Heart left ventricle (tissue), 16 donors: ENCODE measurements at regions of chr6 and their contacts with region 1.

Region 1: DNA sequence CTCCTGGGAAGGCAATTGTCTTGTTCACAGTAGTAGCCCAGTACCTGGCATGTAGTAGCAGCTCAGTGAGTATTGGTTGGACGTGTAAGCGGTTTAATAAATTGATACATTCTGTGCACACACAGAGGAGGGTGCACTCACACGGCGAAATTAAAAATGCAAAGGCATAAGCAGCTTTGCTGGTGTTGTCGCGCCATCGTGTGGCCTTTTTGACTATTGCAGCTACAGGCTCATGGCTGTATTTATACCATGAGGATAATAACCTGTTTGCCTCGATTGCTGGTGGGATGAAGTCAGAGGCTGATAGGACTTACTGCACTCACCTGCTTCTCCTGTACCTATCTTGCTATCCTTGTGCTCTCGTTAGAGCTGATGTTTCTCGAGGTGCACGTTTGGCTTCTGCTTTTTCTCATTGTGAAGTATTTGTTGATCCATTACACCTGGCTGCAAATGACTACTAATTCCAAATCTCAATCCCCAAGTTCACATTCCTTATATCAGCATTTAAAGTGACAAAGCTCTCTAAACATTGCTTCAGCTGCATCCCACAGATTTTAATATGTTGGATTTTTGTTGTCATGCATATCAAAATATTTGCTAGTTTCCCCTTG is 61.5 kb downstream of the TBXT start:
- DNase-seq: peak; percentile 45 to 78 (median 64)
- ATAC-seq: peak in 3 of 4 donors; percentile 60 to 86 (median 73)
- H3K4me3 ChIP-seq: no peak overlapping the region
- H3K27ac ChIP-seq: no peak overlapping the region
- H3K4me1 ChIP-seq: no peaks in the 10 kb centered on the region
- H3K27me3 ChIP-seq: peaks cover 0 to 16% (median 5%) of the 10 kb centered on the region in 9 donors
- CTCF ChIP-seq: peak; percentile 77 to 93 (median 84)
- POLR2A ChIP-seq: no peak

Region 2: DNA sequence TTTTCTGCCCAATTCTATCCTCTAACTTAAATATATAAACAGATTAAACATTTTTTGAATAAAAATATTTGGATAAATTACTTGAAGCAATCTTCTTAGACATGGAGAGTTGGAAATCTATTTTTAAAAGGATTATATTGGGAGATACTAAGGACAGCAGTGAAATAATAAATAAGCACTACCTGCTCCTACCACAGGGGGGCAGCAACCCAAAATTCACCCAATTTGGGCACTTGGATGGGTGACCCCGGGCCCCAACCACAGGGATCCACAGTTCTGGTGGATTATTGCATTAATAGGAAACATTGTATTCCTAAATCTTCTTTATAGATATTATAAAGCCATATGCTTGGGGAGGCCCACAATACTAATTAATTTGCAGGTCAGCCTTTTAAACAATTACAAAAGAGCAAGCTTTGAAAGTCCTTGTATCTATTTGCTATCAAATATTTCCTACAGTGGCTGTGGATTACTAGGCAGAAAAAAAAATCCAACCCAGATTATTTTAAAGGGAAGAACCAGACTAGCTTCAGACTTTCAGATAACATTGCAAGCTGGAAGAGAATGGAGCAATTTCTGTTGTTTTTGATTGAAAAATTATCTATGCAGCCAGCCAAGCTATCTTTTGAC is 376.8 kb before region 1 on chr6:
- intact Hi-C with region 1: loop called in 1 of 10 experiments (anchors 10 kb)
- DNase-seq: no peak
- ATAC-seq: peak in 2 of 4 donors; percentile 51 to 63
- H3K4me3 ChIP-seq: no peak overlapping the region
- H3K27ac ChIP-seq: no peak overlapping the region
- H3K4me1 ChIP-seq: peaks cover 0 to 5% (median 0%) of the 10 kb centered on the region in 12 donors
- H3K27me3 ChIP-seq: no peaks in the 10 kb centered on the region
- CTCF ChIP-seq: peak; percentile 71 to 92 (median 86)
- POLR2A ChIP-seq: no peak

Region 3: DNA sequence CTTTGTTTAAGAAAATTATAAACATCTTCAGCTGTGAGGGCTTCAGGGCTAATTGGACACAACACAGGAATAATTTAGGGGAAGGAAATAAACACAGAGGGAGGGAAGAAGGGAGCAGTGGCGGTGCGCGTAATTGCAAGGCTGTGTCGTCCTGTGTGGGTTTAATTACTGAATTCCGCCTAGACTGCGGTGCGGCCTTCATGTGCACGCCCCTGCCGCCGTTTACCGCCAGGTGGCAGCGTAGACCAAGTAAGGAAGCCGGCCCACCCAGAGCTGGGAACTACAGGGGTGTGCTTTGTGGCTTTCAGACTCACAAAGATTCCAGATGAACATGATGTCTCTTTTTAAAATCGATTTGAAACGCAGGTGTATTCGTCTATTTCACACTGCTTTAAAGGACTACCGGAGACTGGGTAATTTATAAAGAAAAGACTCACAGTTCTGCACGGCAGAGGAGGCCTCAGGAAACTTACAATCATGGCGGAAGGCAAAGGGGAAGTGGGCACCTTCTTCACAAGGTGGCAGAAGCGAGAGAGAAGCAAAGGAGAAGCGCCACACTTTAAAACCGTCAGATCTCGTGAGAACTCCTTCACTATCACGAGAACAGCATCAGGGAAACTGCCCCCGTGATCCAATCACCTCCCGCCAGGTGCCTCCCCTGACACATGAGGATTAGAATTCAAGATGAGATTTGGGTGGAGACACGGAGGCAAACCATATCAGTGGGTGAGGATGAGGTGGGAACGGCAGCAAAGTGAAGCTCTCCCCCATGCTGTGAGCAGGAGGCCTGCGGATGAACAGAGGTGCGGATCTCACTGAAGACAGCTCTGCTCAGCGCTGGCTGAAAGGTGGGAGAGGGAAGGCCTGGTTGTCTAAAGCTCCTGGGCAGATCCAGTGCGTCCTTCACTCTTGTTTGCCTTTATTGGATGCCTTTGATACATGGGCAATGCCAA is 221.1 kb before region 1 on chr6:
- intact Hi-C with region 1: loop called in 6 of 10 experiments (anchors 1 to 2 kb)
- DNase-seq: peak; percentile 74 to 86 (median 77)
- ATAC-seq: peak; percentile 74 to 96 (median 89)
- H3K4me3 ChIP-seq: no peak overlapping the region
- H3K27ac ChIP-seq: no peak overlapping the region
- H3K4me1 ChIP-seq: no peaks in the 10 kb centered on the region
- H3K27me3 ChIP-seq: peaks cover 0 to 2% (median 0%) of the 10 kb centered on the region in 9 donors
- CTCF ChIP-seq: peak; percentile 73 to 95 (median 88)
- POLR2A ChIP-seq: no peak